WTC11 (cell line): ENCODE measurements at regions of chrX and their contacts with region 1.

Region 1: GRCh38 chrX:21985332-21985777 is 44.8 kb downstream of the SMS start:
- DNase-seq: peak; percentile 62
- ATAC-seq: peak; percentile 92
- H3K4me3 Mint-ChIP-seq: no peak overlapping the region
- H3K27ac Mint-ChIP-seq: no peak overlapping the region; the same call in 1 of the 2 replicates
- H3K4me1 Mint-ChIP-seq: no peaks in the 10 kb centered on the region
- H3K27me3 Mint-ChIP-seq: no peaks in the 10 kb centered on the region
- CTCF ChIP-seq: peak; percentile 61

Region 2: DNA sequence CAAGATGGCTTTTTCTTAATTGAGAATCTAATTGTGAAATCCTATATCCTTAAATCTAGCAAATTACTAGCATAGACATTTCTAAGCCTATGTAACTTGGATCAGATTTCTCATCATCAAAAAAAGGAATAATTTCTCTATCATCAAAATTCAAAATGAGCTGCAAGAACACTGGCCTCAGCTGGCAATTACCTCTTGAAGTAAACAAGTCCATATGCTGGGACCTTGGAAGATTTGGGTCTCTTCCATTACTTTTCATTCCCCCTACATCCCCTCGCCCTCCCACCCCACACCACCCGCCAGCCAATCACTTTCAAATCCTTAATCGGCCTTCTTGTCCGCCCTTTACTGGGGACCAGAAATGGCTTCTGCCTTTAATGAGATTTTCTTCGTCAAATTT is 169.2 kb before region 1 on chrX:
- CTCF ChIA-PET with region 1: no interaction called
- POLR2A ChIA-PET with region 1: no interaction called
- DNase-seq: no peak
- ATAC-seq: no peak
- H3K4me3 Mint-ChIP-seq: no peak overlapping the region
- H3K27ac Mint-ChIP-seq: no peak overlapping the region
- H3K4me1 Mint-ChIP-seq: peaks cover 35% of the 10 kb centered on the region
- H3K27me3 Mint-ChIP-seq: no peaks in the 10 kb centered on the region; the same call in 1 of the 2 replicates
- CTCF ChIP-seq: no peak

Region 3: GRCh38 chrX:22025751-22026150 is 40.4 kb after region 1 on chrX:
- CTCF ChIA-PET with region 1: interaction called, 11 read pairs
- POLR2A ChIA-PET with region 1: no interaction called
- DNase-seq: no peak
- ATAC-seq: no peak
- H3K4me3 Mint-ChIP-seq: no peak overlapping the region
- H3K27ac Mint-ChIP-seq: no peak overlapping the region
- H3K4me1 Mint-ChIP-seq: peaks cover 23% of the 10 kb centered on the region
- H3K27me3 Mint-ChIP-seq: no peaks in the 10 kb centered on the region
- CTCF ChIP-seq: no peak

Region 4: GRCh38 chrX:22135994-22136684 is 150.8 kb after region 1 on chrX:
- CTCF ChIA-PET with region 1: interaction called, 20 read pairs
- POLR2A ChIA-PET with region 1: no interaction called
- DNase-seq: no peak
- ATAC-seq: peak; percentile 34
- H3K4me3 Mint-ChIP-seq: no peak overlapping the region
- H3K27ac Mint-ChIP-seq: no peak overlapping the region; the same call in 1 of the 2 replicates
- H3K4me1 Mint-ChIP-seq: peaks cover 30% of the 10 kb centered on the region
- H3K27me3 Mint-ChIP-seq: no peaks in the 10 kb centered on the region
- CTCF ChIP-seq: no peak; the same call in 1 of the 2 replicates

Region 5: GRCh38 chrX:22203186-22203585 is 217.8 kb after region 1 on chrX:
- CTCF ChIA-PET with region 1: no interaction called
- POLR2A ChIA-PET with region 1: no interaction called
- DNase-seq: no peak
- ATAC-seq: no peak
- H3K4me3 Mint-ChIP-seq: no peak overlapping the region
- H3K27ac Mint-ChIP-seq: no peak overlapping the region
- H3K4me1 Mint-ChIP-seq: 0 out of 2 replicates have a peak, but pooled peaks cover 3% of the 10 kb centered on the region
- H3K27me3 Mint-ChIP-seq: no peaks in the 10 kb centered on the region
- CTCF ChIP-seq: no peak